Tibial artery (tissue), 4 donors: ENCODE measurements at regions of chr3 and their contacts with region 1.

Region 1: GRCh38 chr3:194682694-194683310 is 2.9 kb upstream of the FAM43A start:
- DNase-seq: peak; percentile 67 to 83
- H3K4me3 ChIP-seq: no peak overlapping the region
- H3K27ac ChIP-seq: peak overlapping the region in 1 of 2 donors; percentile 10
- H3K4me1 ChIP-seq: peaks cover 0 to 31% (median 27%) of the 10 kb centered on the region in 4 donors
- H3K27me3 ChIP-seq: peaks cover 0 to 14% of the 10 kb centered on the region in 2 donors
- CTCF ChIP-seq: peak; percentile 72 to 84

Region 2: GRCh38 chr3:194711913-194712312 is 29.1 kb after region 1 on chr3:
- intact Hi-C with region 1: no loop called
- DNase-seq: no peak
- H3K4me3 ChIP-seq: no peak overlapping the region
- H3K27ac ChIP-seq: no peak overlapping the region
- H3K4me1 ChIP-seq: peaks cover 0 to 7% (median 0%) of the 10 kb centered on the region in 4 donors
- H3K27me3 ChIP-seq: no peaks in the 10 kb centered on the region
- CTCF ChIP-seq: no peak

Region 3: GRCh38 chr3:195102609-195103467 is 420.0 kb after region 1 on chr3:
- intact Hi-C with region 1: loop called (anchors 5 kb)
- DNase-seq: peak in 1 of 2 donors; percentile 64
- H3K4me3 ChIP-seq: no peak overlapping the region
- H3K27ac ChIP-seq: no peak overlapping the region
- H3K4me1 ChIP-seq: peaks cover 0 to 10% (median 6%) of the 10 kb centered on the region in 4 donors
- H3K27me3 ChIP-seq: no peaks in the 10 kb centered on the region
- CTCF ChIP-seq: no peak

Region 4: DNA sequence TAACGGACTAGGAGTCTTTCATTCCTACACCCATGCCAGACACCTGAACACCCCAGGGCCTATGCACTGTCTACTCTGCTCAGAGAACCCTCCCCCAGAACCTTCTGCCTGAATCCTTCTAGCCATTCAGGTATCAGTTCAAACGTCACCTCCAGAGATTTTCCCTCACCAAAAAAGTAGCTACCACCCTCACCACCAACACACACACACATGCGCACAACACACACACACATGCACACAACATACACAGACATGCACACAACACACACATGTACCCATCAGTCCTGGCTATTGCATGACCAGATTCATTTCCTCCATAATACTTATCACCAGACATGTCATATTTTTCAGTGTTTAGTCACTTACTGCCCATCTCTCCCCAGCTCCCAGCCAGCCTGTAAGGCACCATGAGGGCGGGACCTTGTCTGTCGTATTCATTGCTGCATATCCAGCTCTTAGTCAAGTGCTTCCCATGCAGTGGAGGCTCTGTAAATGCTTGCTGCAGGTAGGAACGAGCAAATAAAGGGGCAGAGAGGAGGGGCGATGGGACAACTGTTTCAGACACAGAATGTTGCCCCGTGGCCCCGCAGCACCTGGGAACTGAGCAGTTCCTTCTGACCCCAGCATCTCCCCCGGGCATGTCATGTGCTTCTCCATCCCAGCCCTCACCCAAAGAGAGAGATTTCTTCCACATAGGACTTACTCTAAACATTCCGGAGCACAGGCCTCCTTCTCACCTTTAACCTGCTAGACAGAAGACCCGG is 559.0 kb after region 1 on chr3:
- intact Hi-C with region 1: no loop called
- DNase-seq: peak in 1 of 2 donors; percentile 48
- H3K4me3 ChIP-seq: no peak overlapping the region
- H3K27ac ChIP-seq: no peak overlapping the region
- H3K4me1 ChIP-seq: peaks cover 3 to 24% (median 21%) of the 10 kb centered on the region in 4 donors
- H3K27me3 ChIP-seq: no peaks in the 10 kb centered on the region
- CTCF ChIP-seq: no peak

Region 5: GRCh38 chr3:195259475-195260279 is 576.9 kb after region 1 on chr3:
- intact Hi-C with region 1: loop called (anchors 5 kb)
- DNase-seq: peak; percentile 91 to 93
- H3K4me3 ChIP-seq: peak overlapping the region; percentile 53 to 63
- H3K27ac ChIP-seq: peak overlapping the region; percentile 61 to 74
- H3K4me1 ChIP-seq: peaks cover 0 to 31% (median 14%) of the 10 kb centered on the region in 4 donors
- H3K27me3 ChIP-seq: no peaks in the 10 kb centered on the region
- CTCF ChIP-seq: peak; percentile 46 to 99

Region 6: GRCh38 chr3:195442573-195443390 is 760.0 kb after region 1 on chr3 and contains the start of gene ACAP2:
- intact Hi-C with region 1: loop called (anchors 5 kb)
- DNase-seq: peak; percentile 99 to 100
- H3K4me3 ChIP-seq: peak within 1 kb of the TSS; percentile 91 to 94
- H3K27ac ChIP-seq: peak within 1 kb of the TSS; percentile 94 to 98
- H3K4me1 ChIP-seq: peaks cover 0 to 26% (median 7%) of the 10 kb centered on the region in 4 donors
- H3K27me3 ChIP-seq: no peaks in the 10 kb centered on the region
- CTCF ChIP-seq: peak in 1 of 2 experiments; percentile 19